A549 (cell line): ENCODE measurements at regions of chr3 and their contacts with region 1.

Region 1: GRCh38 chr3:124761250-124761796 is 31.1 kb downstream of the UMPS start:
- DNase-seq: peak; percentile 68 to 91
- ATAC-seq: peak; percentile 73
- H3K4me3 ChIP-seq: no peak overlapping the region
- H3K27ac ChIP-seq: peak overlapping the region; percentile 60 to 75
- H3K4me1 ChIP-seq: peaks cover 28% of the 10 kb centered on the region
- CTCF ChIP-seq: peak; percentile 95
- EP300 ChIP-seq: no peak
- POLR2A ChIP-seq: no peak
- RAD21 ChIP-seq: peak; percentile 97 to 98

Region 2: DNA sequence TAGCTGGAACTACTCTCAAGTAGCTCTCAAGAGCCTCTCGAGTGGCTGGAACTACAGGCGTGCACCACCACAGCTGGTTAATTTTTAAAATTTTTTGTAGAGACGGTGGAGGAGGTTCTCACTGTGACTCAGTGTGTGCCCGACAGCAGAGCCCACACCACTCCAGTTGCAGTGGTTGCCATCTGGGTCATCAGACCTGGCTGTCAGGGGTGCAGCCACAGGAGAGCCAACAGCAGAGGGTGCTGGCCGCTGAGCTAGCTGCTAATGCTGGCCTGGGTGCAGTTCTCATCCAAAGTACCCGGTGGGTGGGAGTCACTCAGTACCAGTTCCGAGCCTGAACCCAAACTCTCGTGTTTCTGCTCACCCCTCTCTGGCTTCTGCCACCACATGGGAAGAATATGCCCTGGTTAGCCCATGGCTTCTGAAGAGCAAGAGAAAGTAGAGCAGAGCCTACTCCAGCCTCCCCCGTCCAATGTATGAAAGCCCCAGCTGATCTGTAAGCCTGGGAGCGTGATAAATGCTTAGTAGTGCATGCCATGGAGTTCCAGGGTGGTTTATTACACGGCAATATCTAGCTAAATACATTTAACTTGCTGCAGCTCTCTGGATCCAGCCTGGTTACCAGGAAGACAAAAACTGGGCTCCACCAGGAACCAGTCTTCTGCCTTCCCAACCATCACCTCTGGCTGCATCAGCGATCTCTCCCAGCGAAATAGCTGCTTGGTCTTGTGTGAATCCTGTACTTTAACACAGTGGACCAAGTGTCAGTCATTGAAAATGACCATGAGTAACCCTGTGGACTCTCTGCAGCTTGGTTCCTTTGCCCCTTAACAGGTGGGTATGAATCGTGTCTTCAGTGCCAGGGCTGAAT is 14.0 kb before region 1 on chr3:
- CTCF ChIA-PET with region 1: interaction called, 26 read pairs
- POLR2A ChIA-PET with region 1: no interaction called
- DNase-seq: no peak
- ATAC-seq: peak; percentile 46 to 52; a peak in 4 of 6 replicates
- H3K4me3 ChIP-seq: no peak overlapping the region
- H3K27ac ChIP-seq: no peak overlapping the region
- H3K4me1 ChIP-seq: 0 out of 3 replicates have a peak, but pooled peaks cover 5% of the 10 kb centered on the region
- CTCF ChIP-seq: no peak
- EP300 ChIP-seq: no peak
- POLR2A ChIP-seq: no peak
- RAD21 ChIP-seq: no peak

Region 3: GRCh38 chr3:124791639-124792151 is 30.4 kb after region 1 on chr3:
- CTCF ChIA-PET with region 1: interaction called, 42 read pairs
- POLR2A ChIA-PET with region 1: no interaction called
- DNase-seq: no peak
- ATAC-seq: no peak
- H3K4me3 ChIP-seq: no peak overlapping the region
- H3K27ac ChIP-seq: peak overlapping the region in 1 of 2 experiments; percentile 39; a peak in 3 of 6 replicates
- H3K4me1 ChIP-seq: peaks cover 50% of the 10 kb centered on the region
- CTCF ChIP-seq: no peak
- EP300 ChIP-seq: no peak
- POLR2A ChIP-seq: no peak
- RAD21 ChIP-seq: no peak

Region 4: DNA sequence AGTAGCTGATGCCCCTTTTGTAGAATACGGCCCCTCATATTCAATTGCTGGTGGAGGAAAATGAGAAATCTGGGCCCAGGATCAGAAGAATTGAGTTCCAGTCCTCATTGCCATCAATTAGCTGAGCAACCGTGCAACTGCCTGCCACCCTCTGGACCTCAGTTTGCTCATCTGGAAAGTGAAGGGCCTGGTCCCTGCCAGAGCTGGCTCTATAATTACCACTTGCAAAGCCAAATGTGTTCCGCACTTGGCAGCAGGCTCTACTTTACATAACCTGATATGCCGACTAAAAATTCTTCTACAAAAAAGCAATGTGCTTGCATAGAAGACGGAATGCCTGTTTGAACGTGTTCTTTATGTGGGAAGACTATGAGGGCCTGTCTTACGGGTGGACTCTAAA is 134.4 kb after region 1 on chr3:
- CTCF ChIA-PET with region 1: interaction called, 352 read pairs
- POLR2A ChIA-PET with region 1: interaction called, 5 read pairs
- DNase-seq: no peak
- ATAC-seq: no peak
- H3K4me3 ChIP-seq: no peak overlapping the region
- H3K27ac ChIP-seq: no peak overlapping the region
- H3K4me1 ChIP-seq: peaks cover 24% of the 10 kb centered on the region
- CTCF ChIP-seq: no peak
- EP300 ChIP-seq: no peak
- POLR2A ChIP-seq: no peak
- RAD21 ChIP-seq: no peak

Region 5: GRCh38 chr3:124941771-124942170 is 180.4 kb after region 1 on chr3:
- CTCF ChIA-PET with region 1: interaction called, 17 read pairs
- POLR2A ChIA-PET with region 1: no interaction called
- DNase-seq: no peak
- ATAC-seq: no peak
- H3K4me3 ChIP-seq: no peak overlapping the region
- H3K27ac ChIP-seq: no peak overlapping the region
- H3K4me1 ChIP-seq: no peaks in the 10 kb centered on the region
- CTCF ChIP-seq: no peak
- EP300 ChIP-seq: no peak
- POLR2A ChIP-seq: no peak
- RAD21 ChIP-seq: no peak